ENCODE measurements at regions of chr11 and their contacts with region 1.

Region 1: GRCh38 chr11:102109896-102110760 is at the start of gene YAP1:
- DNase-seq: peak; percentile 93
- ATAC-seq: peak; percentile 90
- total RNA-seq, gene YAP1: 112 TPM

Region 2: GRCh38 chr11:102279641-102280170 is 169.6 kb after region 1 on chr11:
- intact Hi-C with region 1: loop called (anchors 10 kb)
- DNase-seq: no peak
- ATAC-seq: peak; percentile 84

Measured in sciatic nerve (tissue), 2 donors.